CD8-positive, alpha-beta T cell (primary cell): ENCODE measurements at regions of chr9 and their contacts with region 1.

Region 1: DNA sequence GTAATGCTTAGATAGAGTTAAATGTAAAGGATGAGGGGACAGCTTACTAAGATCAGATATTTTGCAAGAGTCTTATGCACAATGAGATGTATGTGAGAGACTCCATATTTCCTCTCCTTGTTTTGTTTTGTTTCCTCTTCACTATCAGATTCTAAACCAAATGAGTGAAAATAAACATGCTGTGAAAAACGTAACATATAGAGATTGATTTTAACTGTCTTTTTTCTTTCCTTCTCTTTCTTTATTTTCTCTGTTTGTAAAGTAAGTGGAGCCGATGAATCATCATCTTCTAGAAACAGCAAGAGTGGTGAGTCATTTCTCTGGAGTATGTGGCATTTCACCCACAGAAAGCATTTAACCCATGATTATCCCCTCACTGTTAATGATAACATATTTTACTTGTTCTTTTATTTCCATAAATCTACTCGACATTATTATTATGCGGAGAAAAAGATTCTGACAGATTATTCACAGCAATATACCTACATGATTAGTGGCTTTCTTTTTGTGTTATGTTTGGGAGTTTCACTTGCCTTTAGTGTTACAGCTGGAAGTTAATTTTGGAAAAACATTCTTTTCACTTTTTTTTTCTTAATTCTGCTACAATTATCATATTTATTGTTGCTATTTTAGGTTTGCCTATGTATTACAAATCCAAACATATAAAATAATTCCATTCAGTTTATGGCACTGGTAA is 2.1 kb upstream of the ANXA1 start:
- DNase-seq: peak in 2 of 9 experiments; percentile 66 to 73
- ATAC-seq: peak; percentile 59
- H3K4me3 ChIP-seq: no peak overlapping the region
- H3K4me3 Mint-ChIP-seq: peak overlapping the region; percentile 54
- H3K27ac ChIP-seq: peak overlapping the region in 1 of 2 experiments; percentile 44
- H3K27ac Mint-ChIP-seq: peak overlapping the region; percentile 69
- H3K4me1 ChIP-seq: peaks cover 51% of the 10 kb centered on the region
- H3K4me1 Mint-ChIP-seq: peaks cover 55% of the 10 kb centered on the region
- H3K27me3 ChIP-seq: no peaks in the 10 kb centered on the region
- H3K27me3 Mint-ChIP-seq: no peaks in the 10 kb centered on the region
- CTCF ChIP-seq: no peak

Region 2: GRCh38 chr9:71783120-71783530 is 1366.4 kb before region 1 on chr9:
- CTCF ChIA-PET with region 1: no interaction called
- POLR2A ChIA-PET with region 1: no interaction called
- intact Hi-C with region 1: loop called in 1 of 2 experiments (anchors 5 kb)
- DNase-seq: peak; percentile 76 to 98 (median 85)
- ATAC-seq: peak; percentile 94
- H3K4me3 ChIP-seq: peak overlapping the region; percentile 4 to 10
- H3K4me3 Mint-ChIP-seq: peak overlapping the region; percentile 55
- H3K27ac ChIP-seq: peak overlapping the region; percentile 77 to 90
- H3K27ac Mint-ChIP-seq: peak overlapping the region; percentile 97
- H3K4me1 ChIP-seq: peaks cover 40% of the 10 kb centered on the region
- H3K4me1 Mint-ChIP-seq: peaks cover 47% of the 10 kb centered on the region
- H3K27me3 ChIP-seq: no peaks in the 10 kb centered on the region
- H3K27me3 Mint-ChIP-seq: no peaks in the 10 kb centered on the region
- CTCF ChIP-seq: peak; percentile 51

Region 3: GRCh38 chr9:72526901-72527800 is 622.4 kb before region 1 on chr9:
- CTCF ChIA-PET with region 1: no interaction called
- POLR2A ChIA-PET with region 1: no interaction called
- intact Hi-C with region 1: loop called in 1 of 2 experiments (anchors 5 kb)
- DNase-seq: peak; percentile 45 to 88 (median 82)
- ATAC-seq: peak; percentile 86
- H3K4me3 ChIP-seq: peak overlapping the region; percentile 32 to 43
- H3K4me3 Mint-ChIP-seq: peak overlapping the region; percentile 86
- H3K27ac ChIP-seq: peak overlapping the region; percentile 43 to 66
- H3K27ac Mint-ChIP-seq: peak overlapping the region; percentile 94
- H3K4me1 ChIP-seq: peaks cover 18% of the 10 kb centered on the region
- H3K4me1 Mint-ChIP-seq: peaks cover 30% of the 10 kb centered on the region
- H3K27me3 ChIP-seq: no peaks in the 10 kb centered on the region
- H3K27me3 Mint-ChIP-seq: no peaks in the 10 kb centered on the region
- CTCF ChIP-seq: no peak

Region 4: DNA sequence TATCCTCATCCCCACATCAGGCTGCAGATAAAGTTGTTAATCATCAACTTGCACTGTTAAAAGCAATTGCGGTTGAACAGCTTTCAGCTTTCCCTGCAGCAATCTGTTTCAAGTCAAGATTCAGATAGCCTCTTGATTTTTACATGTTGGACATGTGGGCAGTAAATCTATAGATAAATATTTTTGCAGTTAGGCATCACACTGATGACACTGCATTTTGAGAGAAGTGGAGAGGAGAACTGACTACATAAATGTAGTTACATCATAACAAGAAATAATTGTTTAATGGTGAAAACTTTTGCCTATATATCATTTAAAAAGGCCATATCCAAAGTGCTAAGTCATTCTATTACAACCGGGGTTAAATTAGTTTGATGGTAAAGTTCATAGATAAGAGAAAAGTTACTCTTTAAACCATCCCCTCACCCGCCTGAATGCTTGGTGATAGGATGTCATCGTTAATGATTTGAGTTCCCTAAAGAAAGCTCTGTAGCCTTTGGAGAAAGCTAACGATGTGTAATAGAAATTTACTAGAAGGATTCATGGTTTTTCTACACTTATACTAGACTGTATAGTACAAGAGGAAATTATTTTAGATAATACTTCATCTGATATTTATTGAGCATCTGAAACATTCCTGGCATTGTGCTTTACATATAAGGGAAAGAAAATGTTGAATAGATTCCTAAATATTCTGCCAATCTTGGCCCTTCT is 165.8 kb before region 1 on chr9:
- CTCF ChIA-PET with region 1: no interaction called
- POLR2A ChIA-PET with region 1: no interaction called
- intact Hi-C with region 1: no loop called
- DNase-seq: no peak
- ATAC-seq: no peak
- H3K4me3 ChIP-seq: no peak overlapping the region
- H3K4me3 Mint-ChIP-seq: no peak overlapping the region
- H3K27ac ChIP-seq: no peak overlapping the region
- H3K27ac Mint-ChIP-seq: no peak overlapping the region
- H3K4me1 ChIP-seq: no peaks in the 10 kb centered on the region
- H3K4me1 Mint-ChIP-seq: no peaks in the 10 kb centered on the region
- H3K27me3 ChIP-seq: no peaks in the 10 kb centered on the region
- H3K27me3 Mint-ChIP-seq: no peaks in the 10 kb centered on the region
- CTCF ChIP-seq: no peak

Region 5: DNA sequence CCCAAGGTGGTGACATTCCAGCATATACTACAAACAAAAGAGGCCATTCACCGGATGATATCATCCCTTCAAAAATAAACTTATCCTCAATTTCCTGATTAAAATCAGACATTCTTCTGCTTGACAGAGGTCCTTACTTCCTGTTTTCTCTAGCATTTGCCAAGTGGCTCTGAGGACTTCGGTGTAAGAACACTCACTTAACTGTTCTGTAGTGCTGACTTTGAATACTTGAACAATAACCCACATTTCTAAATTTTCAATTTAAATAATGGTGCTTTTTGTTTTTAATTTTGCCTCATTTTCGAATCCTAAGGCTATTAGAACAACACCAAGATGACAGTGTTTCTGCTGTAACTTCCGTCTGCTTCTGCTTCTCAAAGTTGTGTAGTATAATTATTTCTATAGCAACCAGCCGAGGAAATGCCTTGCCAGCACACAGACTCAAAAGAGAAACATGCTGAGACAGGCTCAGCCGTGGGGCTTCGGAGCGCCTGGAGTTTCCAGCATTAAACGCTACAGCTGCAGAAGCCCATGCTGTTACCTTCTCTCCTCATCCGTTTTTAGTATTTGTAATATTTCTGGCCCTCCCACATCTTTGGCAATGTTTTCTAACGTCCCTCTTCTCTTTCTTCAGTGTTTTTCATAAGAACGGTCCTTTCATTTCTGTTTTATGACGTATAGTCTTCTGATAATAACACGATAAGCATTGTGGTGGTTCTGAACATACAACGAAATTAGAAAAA is 17.3 kb before region 1 on chr9:
- CTCF ChIA-PET with region 1: interaction called, 6 read pairs
- POLR2A ChIA-PET with region 1: interaction called, 10 read pairs
- intact Hi-C with region 1: loop called (anchors 1 to 2 kb)
- DNase-seq: peak; percentile 51 to 92 (median 72)
- ATAC-seq: peak; percentile 90
- H3K4me3 ChIP-seq: peak overlapping the region; percentile 57 to 65
- H3K4me3 Mint-ChIP-seq: peak overlapping the region; percentile 87
- H3K27ac ChIP-seq: peak overlapping the region; percentile 87 to 94
- H3K27ac Mint-ChIP-seq: peak overlapping the region; percentile 95
- H3K4me1 ChIP-seq: peaks cover 7% of the 10 kb centered on the region
- H3K4me1 Mint-ChIP-seq: peaks cover 25% of the 10 kb centered on the region
- H3K27me3 ChIP-seq: no peaks in the 10 kb centered on the region
- H3K27me3 Mint-ChIP-seq: no peaks in the 10 kb centered on the region
- CTCF ChIP-seq: no peak

Region 6: DNA sequence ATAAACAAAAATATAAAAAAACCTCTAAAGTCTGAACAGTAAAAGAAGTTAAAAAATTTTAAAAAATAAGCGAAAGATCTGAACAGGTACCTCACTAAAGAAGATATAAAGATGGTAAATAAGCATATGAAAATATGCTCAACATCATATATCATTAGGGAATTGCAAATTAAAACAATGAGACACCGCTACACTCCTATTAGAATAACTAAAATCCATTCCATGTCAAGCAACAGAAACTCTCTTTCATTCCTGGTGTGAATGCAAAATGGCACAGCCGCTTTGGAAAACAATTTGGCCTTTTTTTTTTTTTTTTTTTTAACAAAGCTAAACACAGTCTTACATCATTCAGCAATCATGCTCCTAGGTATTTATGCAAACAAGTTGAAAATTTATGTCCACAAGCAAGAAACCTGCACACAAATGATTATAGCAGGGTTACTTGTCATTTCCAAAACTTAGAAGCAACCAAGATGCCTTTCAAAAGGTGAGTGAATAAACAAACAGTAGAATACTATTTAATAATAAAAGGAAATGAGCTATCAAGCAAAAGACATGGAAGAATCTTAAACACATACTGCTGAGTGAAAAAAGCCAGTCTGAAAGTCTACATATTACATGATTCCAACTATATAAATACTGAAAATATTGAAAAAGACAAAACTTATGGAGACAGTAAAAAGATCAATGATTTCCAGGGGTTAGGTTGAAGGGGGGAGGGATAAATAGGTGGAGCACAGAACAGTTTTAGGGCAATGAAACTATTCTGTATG is 24.2 kb after region 1 on chr9:
- CTCF ChIA-PET with region 1: no interaction called
- POLR2A ChIA-PET with region 1: interaction called, 6 read pairs
- intact Hi-C with region 1: loop called in 1 of 2 experiments (anchors 2 kb)
- DNase-seq: no peak
- ATAC-seq: no peak
- H3K4me3 ChIP-seq: no peak overlapping the region
- H3K4me3 Mint-ChIP-seq: no peak overlapping the region
- H3K27ac ChIP-seq: no peak overlapping the region
- H3K27ac Mint-ChIP-seq: no peak overlapping the region
- H3K4me1 ChIP-seq: no peaks in the 10 kb centered on the region
- H3K4me1 Mint-ChIP-seq: no peaks in the 10 kb centered on the region
- H3K27me3 ChIP-seq: no peaks in the 10 kb centered on the region
- H3K27me3 Mint-ChIP-seq: no peaks in the 10 kb centered on the region
- CTCF ChIP-seq: no peak